Transverse colon (tissue), 4 donors: ENCODE measurements at regions of chr15 and their contacts with region 1.

Region 1: GRCh38 chr15:51111061-51111460 is 16.4 kb upstream of the TNFAIP8L3 start:
- DNase-seq: no peak
- H3K4me3 ChIP-seq: no peak overlapping the region
- H3K27ac ChIP-seq: no peak overlapping the region
- H3K4me1 ChIP-seq: no peaks in the 10 kb centered on the region
- H3K27me3 ChIP-seq: no peaks in the 10 kb centered on the region
- CTCF ChIP-seq: no peak
- EP300 ChIP-seq: no peak
- POLR2A ChIP-seq: no peak

Region 2: DNA sequence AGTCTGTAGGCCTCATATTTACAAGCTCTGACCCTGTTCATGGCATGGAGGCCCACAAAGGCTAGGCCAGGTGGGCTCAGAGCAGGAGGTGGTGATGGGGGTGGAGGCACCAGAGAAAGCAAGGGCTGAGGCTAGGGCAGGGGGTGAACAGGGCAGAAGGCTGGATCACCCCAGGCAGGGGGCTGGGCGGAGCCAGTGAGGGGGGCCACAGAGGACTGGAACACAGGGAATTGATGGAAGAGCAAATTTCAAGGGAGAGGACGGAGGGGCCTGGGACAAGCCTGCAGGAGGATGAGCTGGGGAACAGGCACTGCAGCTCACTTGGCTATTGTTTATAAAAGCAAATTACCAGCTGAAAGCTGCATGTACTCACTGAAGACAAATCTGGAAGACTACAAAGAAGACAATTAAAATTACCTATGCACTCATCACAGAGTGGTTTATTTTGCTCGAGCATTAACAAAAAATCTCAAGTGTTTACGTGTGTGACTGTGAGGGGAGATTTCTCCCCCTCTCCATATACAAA is 27.4 kb before region 1 on chr15:
- in situ Hi-C with region 1: no loop called
- intact Hi-C with region 1: loop called (anchors 1 kb)
- DNase-seq: no peak
- H3K4me3 ChIP-seq: no peak overlapping the region
- H3K27ac ChIP-seq: no peak overlapping the region
- H3K4me1 ChIP-seq: no peaks in the 10 kb centered on the region
- H3K27me3 ChIP-seq: no peaks in the 10 kb centered on the region
- CTCF ChIP-seq: no peak
- EP300 ChIP-seq: no peak
- POLR2A ChIP-seq: no peak

Region 3: GRCh38 chr15:51162865-51163762 is 52.1 kb after region 1 on chr15:
- in situ Hi-C with region 1: no loop called
- intact Hi-C with region 1: loop called (anchors 2 kb)
- DNase-seq: peak; percentile 69
- H3K4me3 ChIP-seq: peak overlapping the region in 1 of 4 donors; percentile 3
- H3K27ac ChIP-seq: no peak overlapping the region
- H3K4me1 ChIP-seq: peaks cover 0 to 7% (median 5%) of the 10 kb centered on the region in 4 donors
- H3K27me3 ChIP-seq: no peaks in the 10 kb centered on the region
- CTCF ChIP-seq: peak; percentile 87 to 98 (median 96)
- EP300 ChIP-seq: no peak
- POLR2A ChIP-seq: no peak